ENCODE measurements at regions of chr17 and their contacts with region 1.

Region 1: DNA sequence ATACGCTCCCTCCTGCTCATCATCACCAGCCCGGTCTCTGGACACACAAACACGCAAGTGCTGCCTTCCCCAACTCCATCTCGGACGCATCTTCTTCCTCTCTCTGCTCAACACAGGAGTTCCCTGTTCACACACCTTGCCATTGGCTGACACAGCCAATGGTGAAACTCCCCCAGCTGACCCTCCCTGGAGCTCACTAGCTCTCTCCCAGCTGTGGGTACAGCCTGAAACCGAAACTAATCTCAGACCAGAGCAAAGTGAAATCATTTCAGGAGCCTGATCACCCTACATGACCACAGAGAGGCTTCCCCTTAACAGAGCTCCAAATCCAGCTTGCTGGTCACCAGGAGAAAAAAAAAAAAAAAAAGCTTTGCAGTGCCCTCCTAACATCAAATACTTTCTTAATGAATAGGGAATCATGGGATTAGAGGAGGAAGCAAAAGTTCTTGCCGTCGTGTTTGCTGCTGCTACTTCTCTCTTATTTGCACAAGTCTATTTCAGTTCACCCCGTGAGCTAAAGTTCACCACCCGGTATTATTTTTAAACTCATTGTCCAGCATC is 8.3 kb downstream of the CUEDC1 start:
- DNase-seq: peak; percentile 56
- H3K4me3 Mint-ChIP-seq: peak overlapping the region; percentile 68
- H3K27ac Mint-ChIP-seq: peak overlapping the region; percentile 49
- H3K4me1 Mint-ChIP-seq: peaks cover 46% of the 10 kb centered on the region
- H3K27me3 Mint-ChIP-seq: no peaks in the 10 kb centered on the region
- CTCF ChIP-seq: no peak

Region 2: DNA sequence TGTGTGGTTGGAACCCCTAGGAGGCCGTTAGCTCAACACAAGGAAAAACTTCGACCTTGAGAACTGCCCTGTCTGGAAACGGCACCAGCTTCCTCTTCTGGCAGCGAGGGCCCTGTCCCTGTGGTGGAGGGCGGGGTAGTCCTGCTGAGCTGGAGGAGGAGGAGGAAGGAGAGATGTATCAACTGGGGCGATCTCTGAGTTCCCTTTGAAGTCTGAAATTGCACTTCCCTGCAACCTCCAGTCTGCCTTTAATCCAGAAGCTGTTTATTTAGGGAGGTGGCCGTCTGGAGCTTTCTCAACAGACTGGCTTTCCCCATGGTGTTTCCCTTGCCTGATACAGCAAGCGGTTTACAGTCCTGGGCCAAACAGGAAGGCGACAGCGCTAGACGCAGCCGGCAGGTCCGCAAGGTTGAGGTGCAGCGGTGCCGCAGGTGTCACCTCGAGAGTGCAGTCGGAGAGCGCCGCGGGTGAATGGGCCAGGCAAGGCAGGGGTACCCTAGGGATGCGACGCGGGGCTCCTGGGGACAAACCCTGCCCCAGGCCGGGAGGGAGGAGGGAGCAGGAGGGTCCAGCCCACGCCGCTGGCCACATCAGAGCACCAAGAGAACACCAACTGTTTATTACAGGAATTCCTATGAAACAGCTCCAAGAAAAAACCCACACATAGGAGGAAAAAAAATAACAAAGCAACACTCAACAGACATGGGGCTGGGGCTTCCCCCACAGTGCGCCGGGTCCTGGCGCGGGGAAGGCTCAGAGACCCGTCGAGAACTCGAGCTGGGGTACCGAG is 85.7 kb before region 1 on chr17:
- CTCF ChIA-PET with region 1: interaction called, 73 read pairs
- POLR2A ChIA-PET with region 1: interaction called, 4 read pairs
- intact Hi-C with region 1: no loop called
- DNase-seq: no peak
- H3K4me3 Mint-ChIP-seq: no peak overlapping the region
- H3K27ac Mint-ChIP-seq: no peak overlapping the region
- H3K4me1 Mint-ChIP-seq: peaks cover 14% of the 10 kb centered on the region
- H3K27me3 Mint-ChIP-seq: no peaks in the 10 kb centered on the region
- CTCF ChIP-seq: no peak

Region 3: GRCh38 chr17:57868007-57868909 is 78.6 kb before region 1 on chr17:
- CTCF ChIA-PET with region 1: interaction called, 33 read pairs
- POLR2A ChIA-PET with region 1: interaction called, 35 read pairs
- intact Hi-C with region 1: no loop called
- DNase-seq: peak; percentile 93
- H3K4me3 Mint-ChIP-seq: peak overlapping the region; percentile 41
- H3K27ac Mint-ChIP-seq: peak overlapping the region; percentile 93
- H3K4me1 Mint-ChIP-seq: peaks cover 33% of the 10 kb centered on the region
- H3K27me3 Mint-ChIP-seq: no peaks in the 10 kb centered on the region
- CTCF ChIP-seq: peak; percentile 65

Region 4: GRCh38 chr17:57875309-57876115 is 71.4 kb before region 1 on chr17:
- CTCF ChIA-PET with region 1: interaction called, 33 read pairs
- POLR2A ChIA-PET with region 1: interaction called, 35 read pairs
- intact Hi-C with region 1: loop called (anchors 2 kb)
- DNase-seq: peak; percentile 94
- H3K4me3 Mint-ChIP-seq: peak overlapping the region; percentile 41
- H3K27ac Mint-ChIP-seq: peak overlapping the region; percentile 51
- H3K4me1 Mint-ChIP-seq: peaks cover 45% of the 10 kb centered on the region
- H3K27me3 Mint-ChIP-seq: no peaks in the 10 kb centered on the region
- CTCF ChIP-seq: peak; percentile 52

Region 5: DNA sequence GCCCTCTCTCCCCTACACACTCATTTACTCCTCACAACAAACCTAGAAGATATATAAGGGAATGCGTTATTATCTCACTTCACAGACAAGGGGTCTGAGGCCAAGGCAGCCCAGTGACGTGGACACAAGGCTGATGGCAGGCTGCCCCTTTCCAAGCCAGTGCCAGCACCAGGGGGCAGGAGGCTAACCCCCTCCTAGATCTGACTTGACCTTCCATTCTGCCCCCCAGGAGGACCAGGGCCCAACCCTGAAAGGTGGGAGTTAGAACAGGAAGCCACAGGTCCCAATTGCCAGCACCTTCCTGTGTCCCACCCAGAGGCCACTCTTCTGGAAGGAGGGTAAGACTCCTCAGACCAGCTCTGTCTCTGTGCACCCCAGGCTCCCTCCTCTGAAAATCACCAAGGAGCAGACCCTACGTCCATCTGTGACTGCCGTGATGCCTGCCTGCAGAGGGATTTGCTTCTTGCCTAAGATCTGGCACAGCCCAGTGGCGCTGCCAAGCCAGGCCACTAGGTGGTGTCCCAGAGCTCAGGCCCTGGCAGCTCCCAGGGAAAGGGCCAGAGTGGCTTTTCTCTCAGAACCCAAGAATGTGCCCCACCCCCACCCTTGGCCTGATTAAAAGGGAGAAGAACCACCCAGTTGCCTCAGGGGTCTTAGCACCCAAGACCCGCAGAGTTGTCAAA is 54.6 kb before region 1 on chr17:
- CTCF ChIA-PET with region 1: interaction called, 59 read pairs
- POLR2A ChIA-PET with region 1: interaction called, 22 read pairs
- intact Hi-C with region 1: loop called (anchors 2 kb)
- DNase-seq: peak; percentile 91
- H3K4me3 Mint-ChIP-seq: peak overlapping the region; percentile 64
- H3K27ac Mint-ChIP-seq: peak overlapping the region; percentile 87
- H3K4me1 Mint-ChIP-seq: peaks cover 41% of the 10 kb centered on the region
- H3K27me3 Mint-ChIP-seq: no peaks in the 10 kb centered on the region
- CTCF ChIP-seq: peak; percentile 96

Measured in MCF 10A (cell line).